Panc1 (cell line): ENCODE measurements at regions of chr13 and their contacts with region 1.

Region 1: DNA sequence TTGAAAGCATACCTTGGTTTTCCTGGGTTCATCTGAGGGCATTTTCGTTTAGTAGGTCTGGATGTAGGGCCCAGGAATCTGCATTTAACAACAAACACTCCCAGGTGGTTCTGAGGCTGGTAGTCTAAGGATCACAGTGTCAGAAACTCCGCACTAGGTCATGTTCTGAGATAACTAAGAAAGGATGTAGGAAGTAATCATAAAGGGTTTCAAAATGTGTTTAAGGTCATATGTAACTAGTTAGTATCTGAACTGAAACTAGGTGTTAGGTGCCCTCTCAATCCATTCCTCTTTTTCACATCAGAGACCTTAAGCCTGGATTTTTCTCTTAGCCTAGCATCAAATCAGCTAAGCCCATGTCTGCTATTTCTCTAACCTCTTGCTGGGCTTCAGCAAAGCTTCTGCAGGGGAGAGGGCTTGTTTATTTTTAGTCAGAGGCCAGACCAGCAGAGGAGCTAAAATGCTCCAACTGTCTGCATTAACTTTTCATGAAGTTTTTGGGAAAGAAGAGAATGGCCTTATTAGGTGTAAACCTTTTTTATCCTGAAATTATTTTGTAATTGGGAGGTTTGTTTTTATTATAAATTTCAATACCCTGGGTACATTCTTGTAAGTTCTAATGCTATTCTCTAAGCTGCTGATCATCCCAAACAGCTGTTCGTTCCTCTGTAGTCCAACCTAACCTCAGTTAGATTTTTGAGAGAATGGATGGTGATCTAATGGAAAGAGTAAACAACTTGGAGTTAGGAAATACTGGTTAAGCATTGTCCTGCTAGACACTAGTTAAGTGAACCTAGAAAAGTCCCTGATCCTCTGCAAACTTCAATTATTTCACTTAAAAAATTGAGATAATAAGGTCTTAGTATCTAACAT is 262.8 kb upstream of the RFC3 start:
- DNase-seq: no peak
- ATAC-seq: no peak
- H3K4me3 ChIP-seq: no peak overlapping the region
- H3K27ac ChIP-seq: no peak overlapping the region
- H3K4me1 ChIP-seq: no peaks in the 10 kb centered on the region
- H3K27me3 ChIP-seq: no peaks in the 10 kb centered on the region
- CTCF ChIP-seq: no peak

Region 2: GRCh38 chr13:33723772-33724435 is 168.7 kb after region 1 on chr13:
- CTCF ChIA-PET with region 1: no interaction called
- POLR2A ChIA-PET with region 1: no interaction called
- in situ Hi-C with region 1: no loop called
- intact Hi-C with region 1: loop called (anchors 5 kb)
- DNase-seq: peak; percentile 45
- ATAC-seq: peak; percentile 98
- H3K4me3 ChIP-seq: no peak overlapping the region
- H3K27ac ChIP-seq: peak overlapping the region; percentile 48; the same call in 1 of the 2 replicates
- H3K4me1 ChIP-seq: peaks cover 6% of the 10 kb centered on the region; the same call in 1 of the 2 replicates
- H3K27me3 ChIP-seq: no peaks in the 10 kb centered on the region
- CTCF ChIP-seq: peak; percentile 78